ENCODE measurements at regions of chr14 and their contacts with region 1.

Region 1: DNA sequence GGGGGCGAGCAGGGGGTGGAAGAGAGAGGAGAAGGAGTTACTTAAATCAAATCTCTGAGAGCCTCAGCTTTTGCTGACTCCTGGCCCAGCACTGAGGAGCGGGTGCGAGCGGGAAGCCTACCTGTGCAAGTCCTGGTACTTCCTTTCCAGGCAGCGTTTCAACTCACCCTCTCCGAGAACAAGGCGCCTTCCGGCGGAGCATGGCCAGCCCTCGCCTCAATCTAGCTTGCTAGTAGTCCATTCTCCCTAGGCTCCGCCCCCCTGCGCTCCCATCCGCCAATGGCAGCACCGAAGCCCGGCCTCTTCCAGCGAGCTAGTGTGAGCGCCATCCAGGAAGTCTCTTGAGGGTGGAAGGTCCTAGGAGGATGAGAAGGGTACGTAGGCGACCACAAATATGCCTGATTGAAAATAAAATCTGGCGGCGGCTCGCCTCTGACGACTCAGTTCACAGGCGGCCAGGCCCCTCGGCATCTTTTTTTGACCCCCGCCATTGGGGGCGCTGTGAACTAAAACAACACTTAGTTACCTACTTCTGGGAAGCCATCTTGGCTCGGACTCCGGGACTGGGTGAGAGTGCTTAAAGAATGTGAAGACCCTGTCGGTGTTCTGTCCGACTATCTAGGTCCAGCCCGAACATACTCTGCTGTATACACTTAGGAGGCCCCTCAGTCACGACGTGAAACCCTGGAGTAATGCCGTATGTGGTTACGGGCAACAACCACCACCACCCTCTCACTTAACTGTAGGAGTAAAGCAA is at the start of gene CHD8:
- DNase-seq: peak; percentile 99 to 100
- ATAC-seq: peak; percentile 99 to 100 (median 100)
- H3K4me3 ChIP-seq: peak within 1 kb of the TSS; percentile 77 to 93 (median 87)
- H3K27ac ChIP-seq: peak within 1 kb of the TSS; percentile 87 to 97 (median 94)
- H3K4me1 ChIP-seq: peaks cover 6 to 32% (median 25%) of the 10 kb centered on the region in 9 donors
- H3K27me3 ChIP-seq: no peaks in the 10 kb centered on the region
- CTCF ChIP-seq: peak; percentile 24 to 79 (median 69)
- total RNA-seq, gene CHD8: 31.1 to 47.5 (median 40.1) TPM

Region 2: DNA sequence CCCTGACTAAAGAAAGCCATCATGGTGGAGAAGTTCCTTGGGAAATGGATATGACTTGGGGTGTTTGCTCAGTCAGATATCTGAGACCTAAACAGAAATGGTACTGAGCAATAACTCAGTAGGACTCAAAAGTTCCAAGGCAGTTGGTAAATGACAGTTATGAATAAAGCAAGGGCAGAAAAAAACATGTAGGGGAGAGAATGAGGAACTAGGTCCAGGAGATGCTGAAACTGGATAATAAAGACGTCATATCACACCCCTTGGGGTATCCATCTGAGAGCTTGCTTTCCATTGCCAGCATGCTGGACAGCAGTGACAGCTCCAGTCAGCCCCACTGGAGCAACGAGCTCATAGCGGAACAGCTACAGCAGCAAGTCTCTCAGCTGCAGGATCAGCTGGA is 138.7 kb before region 1 on chr14:
- intact Hi-C with region 1: no loop called
- DNase-seq: no peak
- ATAC-seq: no peak
- H3K4me3 ChIP-seq: no peak overlapping the region
- H3K27ac ChIP-seq: no peak overlapping the region
- H3K4me1 ChIP-seq: peaks cover 0 to 30% (median 0%) of the 10 kb centered on the region in 9 donors
- H3K27me3 ChIP-seq: peaks cover 0 to 5% (median 0%) of the 10 kb centered on the region in 7 donors
- CTCF ChIP-seq: no peak

Region 3: DNA sequence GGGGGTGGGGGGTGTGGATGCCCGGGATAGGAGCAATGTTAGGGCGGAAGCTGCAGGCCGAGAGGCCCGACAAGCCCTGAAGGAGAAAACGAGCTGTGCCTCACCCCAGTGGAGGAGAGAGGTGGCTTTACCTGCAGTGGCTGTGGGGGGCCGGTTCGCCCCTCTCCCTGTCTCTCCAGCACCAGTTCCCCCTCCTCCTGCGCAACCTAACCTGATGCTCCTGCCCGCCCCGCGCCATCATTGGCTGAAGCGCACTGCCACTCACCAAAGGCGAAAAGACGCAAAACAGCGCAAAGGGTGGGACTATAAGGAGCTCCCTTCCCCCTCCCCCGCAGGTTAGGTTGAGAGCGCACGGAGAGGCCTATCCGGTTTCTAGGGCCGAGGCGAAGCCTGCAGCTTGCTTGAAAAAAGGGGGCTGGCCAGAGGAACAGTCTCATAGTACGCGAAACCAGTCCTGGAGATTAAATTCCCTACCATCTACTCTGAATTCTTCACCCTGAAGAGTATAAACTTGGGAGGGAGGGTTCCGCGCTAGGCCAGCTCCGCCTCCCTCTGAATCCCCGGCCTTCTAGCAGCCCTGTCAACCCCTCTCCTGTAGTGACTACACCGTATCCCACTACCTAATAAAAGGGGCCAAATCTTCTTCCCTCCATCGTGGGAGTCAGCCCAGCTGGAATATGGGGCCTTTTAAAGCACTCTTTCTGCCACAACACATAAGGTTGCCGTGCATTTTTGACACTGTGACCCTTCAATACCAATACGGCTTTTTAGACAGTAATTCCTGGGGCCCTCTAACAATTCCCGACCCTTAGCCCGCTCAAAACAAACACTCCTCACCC is 18.8 kb before region 1 on chr14:
- intact Hi-C with region 1: loop called in 6 of 10 experiments (anchors 1 to 2 kb)
- DNase-seq: peak; percentile 98 to 100
- ATAC-seq: peak; percentile 99 to 100 (median 100)
- H3K4me3 ChIP-seq: peak overlapping the region; percentile 46 to 92 (median 82)
- H3K27ac ChIP-seq: peak overlapping the region; percentile 49 to 95 (median 90)
- H3K4me1 ChIP-seq: peaks cover 0 to 37% (median 28%) of the 10 kb centered on the region in 9 donors
- H3K27me3 ChIP-seq: no peaks in the 10 kb centered on the region
- CTCF ChIP-seq: no peak

Region 4: DNA sequence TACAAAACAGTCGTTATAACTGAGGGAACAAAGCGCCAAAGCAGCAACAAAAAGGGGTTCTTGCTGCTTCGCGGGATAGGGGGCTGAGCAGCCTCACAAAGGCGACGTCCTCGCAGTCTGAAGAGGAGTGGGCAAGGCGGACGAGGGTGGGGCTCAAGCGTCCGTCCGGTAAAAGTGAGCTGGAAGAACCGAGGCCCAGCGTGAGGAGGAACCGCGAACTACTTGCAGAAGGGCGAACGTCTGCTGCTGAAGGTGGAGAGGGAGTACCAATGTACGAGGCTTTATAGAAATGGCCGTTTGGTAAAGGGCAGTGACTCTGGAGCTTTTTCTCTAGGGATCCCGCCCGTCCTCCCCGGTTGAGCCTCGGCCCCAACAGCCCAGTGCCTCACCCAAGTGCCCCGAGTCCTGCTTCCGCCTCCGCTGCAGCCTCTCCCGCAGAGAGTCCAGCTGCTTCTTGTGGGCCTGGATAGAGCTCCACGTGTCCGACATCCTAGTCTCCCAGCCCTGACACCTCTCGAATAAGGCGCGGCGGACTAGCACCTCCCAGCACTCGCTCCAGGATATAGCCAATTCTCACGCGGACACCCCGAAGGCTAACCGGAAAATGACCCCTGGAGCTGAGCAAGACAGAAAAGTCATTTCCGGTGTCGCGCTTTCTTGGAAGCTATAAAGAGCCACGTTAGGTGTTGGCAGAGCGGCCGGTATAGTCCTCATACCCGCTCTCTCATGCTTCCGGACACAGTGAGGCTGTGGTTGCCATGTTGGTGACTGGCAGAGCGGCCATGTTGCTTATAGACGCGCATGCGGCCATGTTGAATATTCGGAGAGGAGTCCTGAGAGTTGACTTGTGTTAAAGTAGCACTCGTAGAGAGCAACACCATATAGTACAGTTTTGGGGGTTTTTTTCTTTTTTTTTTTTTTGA is 54.9 kb after region 1 on chr14 and contains the start of gene METTL3:
- intact Hi-C with region 1: loop called in 1 of 10 experiments (anchors 1 kb)
- DNase-seq: peak; percentile 94 to 99
- ATAC-seq: peak; percentile 99 to 100 (median 99)
- H3K4me3 ChIP-seq: peak within 1 kb of the TSS; percentile 48 to 94 (median 78)
- H3K27ac ChIP-seq: peak within 1 kb of the TSS in 9 of 10 donors; percentile 77 to 90 (median 85)
- H3K4me1 ChIP-seq: peaks cover 0 to 30% (median 19%) of the 10 kb centered on the region in 9 donors
- H3K27me3 ChIP-seq: peaks cover 0 to under 1% (median 0%) of the 10 kb centered on the region in 7 donors
- CTCF ChIP-seq: peak in 1 of 9 donors; percentile 3
- total RNA-seq, gene METTL3: 21.0 to 30.3 (median 24.0) TPM